Gastrocnemius medialis (tissue), 4 donors: ENCODE measurements at regions of chr12 and their contacts with region 1.

Region 1: GRCh38 chr12:127293507-127294310 is 973.3 kb upstream of the TMEM132C start:
- DNase-seq: peak in 1 of 2 donors; percentile 25
- ATAC-seq: no peak
- H3K4me3 ChIP-seq: no peak overlapping the region
- H3K27ac ChIP-seq: no peak overlapping the region
- H3K4me1 ChIP-seq: no peaks in the 10 kb centered on the region
- H3K27me3 ChIP-seq: no peaks in the 10 kb centered on the region
- CTCF ChIP-seq: peak; percentile 19 to 58 (median 42)
- POLR2A ChIP-seq: no peak

Region 2: DNA sequence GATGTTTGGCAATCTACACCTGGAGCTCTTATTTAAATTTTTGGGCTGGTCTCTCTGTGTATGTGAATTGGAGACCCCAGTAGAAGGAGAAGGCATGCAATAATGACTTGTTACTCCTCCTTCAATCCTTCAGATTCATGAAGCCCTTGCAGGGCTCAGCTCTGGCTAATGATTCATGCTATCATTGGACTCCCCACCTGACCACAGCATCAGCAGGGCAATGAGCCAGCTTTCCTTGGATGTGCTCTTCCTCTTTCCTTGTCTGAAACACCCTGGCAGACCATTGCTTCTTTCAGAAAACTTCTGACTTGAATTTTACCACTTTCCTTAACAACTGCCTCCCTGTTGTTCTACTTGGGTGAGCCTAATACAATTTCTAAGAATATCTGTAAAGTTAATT is 1209.2 kb before region 1 on chr12:
- in situ Hi-C with region 1: no loop called
- intact Hi-C with region 1: no loop called
- DNase-seq: no peak
- ATAC-seq: no peak
- H3K4me3 ChIP-seq: no peak overlapping the region
- H3K27ac ChIP-seq: no peak overlapping the region
- H3K4me1 ChIP-seq: no peaks in the 10 kb centered on the region
- H3K27me3 ChIP-seq: no peaks in the 10 kb centered on the region
- CTCF ChIP-seq: no peak
- POLR2A ChIP-seq: no peak

Region 3: DNA sequence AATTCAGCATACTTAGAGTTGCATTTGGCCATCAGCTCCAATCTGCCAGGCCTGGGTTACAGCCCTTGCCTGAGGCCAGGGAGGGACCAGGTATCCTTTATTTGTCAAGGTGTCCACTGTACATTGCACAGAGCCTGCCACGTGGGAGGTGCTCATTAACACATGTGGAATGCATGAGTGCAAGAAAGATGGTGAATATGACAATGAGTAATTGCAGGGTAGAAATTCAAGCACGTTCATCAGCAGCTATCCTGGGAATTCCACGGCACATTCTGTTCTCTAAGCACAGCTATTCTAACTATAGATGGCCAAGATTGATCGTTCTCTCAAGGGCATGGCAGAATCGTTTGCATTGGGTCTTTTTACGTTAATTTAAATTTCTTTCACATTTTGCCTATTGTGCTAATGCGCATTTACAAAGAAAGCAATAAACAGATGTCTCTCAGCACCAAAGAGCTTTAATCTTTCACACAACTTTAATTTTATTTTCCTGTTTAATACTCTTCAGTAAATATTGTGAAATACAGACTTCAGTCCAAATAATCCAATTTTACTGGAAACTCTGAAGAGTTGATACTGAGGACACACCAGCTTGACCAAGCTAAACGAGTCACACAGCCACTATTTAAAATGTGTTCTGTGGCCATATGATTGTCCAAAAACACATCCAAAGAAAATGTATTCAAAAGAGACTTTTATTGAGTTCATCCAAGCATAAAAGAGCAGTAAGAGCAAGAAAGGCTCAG is 52.5 kb before region 1 on chr12:
- in situ Hi-C with region 1: no loop called
- intact Hi-C with region 1: no loop called
- DNase-seq: peak; percentile 36 to 66
- ATAC-seq: peak; percentile 84
- H3K4me3 ChIP-seq: no peak overlapping the region
- H3K27ac ChIP-seq: peak overlapping the region in 3 of 4 donors; percentile 26 to 42 (median 32)
- H3K4me1 ChIP-seq: no peaks in the 10 kb centered on the region
- H3K27me3 ChIP-seq: no peaks in the 10 kb centered on the region
- CTCF ChIP-seq: no peak
- POLR2A ChIP-seq: no peak

Region 4: GRCh38 chr12:127304751-127305725 is 11.3 kb after region 1 on chr12:
- in situ Hi-C with region 1: no loop called
- intact Hi-C with region 1: loop called (anchors 1 kb)
- DNase-seq: no peak
- ATAC-seq: no peak
- H3K4me3 ChIP-seq: no peak overlapping the region
- H3K27ac ChIP-seq: no peak overlapping the region
- H3K4me1 ChIP-seq: no peaks in the 10 kb centered on the region
- H3K27me3 ChIP-seq: no peaks in the 10 kb centered on the region
- CTCF ChIP-seq: no peak
- POLR2A ChIP-seq: no peak